ENCODE measurements at regions of chr7 and their contacts with region 1.

Region 1: GRCh38 chr7:140983802-140984201 is 30.9 kb downstream of the MRPS33 start:
- DNase-seq: no peak
- H3K4me3 ChIP-seq: no peak overlapping the region
- H3K27ac ChIP-seq: no peak overlapping the region
- H3K4me1 ChIP-seq: no peaks in the 10 kb centered on the region
- H3K27me3 ChIP-seq: no peaks in the 10 kb centered on the region
- CTCF ChIP-seq: peak; percentile 22 to 24

Region 2: DNA sequence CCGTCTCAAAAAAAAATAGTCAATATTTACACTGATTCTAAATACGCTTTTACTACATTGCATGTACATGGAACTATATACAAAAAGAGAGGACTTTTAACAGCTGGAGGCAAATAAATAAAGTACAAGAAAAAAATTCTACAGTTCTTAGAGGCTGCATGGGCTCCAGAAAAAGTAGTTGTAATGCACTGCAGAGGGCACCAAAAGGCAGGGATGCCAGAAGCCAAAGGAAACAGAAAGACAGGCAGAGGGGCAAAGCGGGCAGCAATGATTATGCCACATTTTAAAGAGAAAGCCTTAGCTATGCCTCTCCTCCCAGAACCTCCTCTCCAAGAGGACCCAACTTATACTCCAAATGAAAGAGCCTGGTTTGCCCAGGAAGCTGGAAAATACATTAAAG is 322.7 kb before region 1 on chr7:
- CTCF ChIA-PET with region 1: no interaction called
- dilution Hi-C with region 1: no loop called
- in situ Hi-C with region 1: no loop called
- intact Hi-C with region 1: loop called (anchors 2 kb)
- DNase-seq: no peak
- H3K4me3 ChIP-seq: no peak overlapping the region
- H3K27ac ChIP-seq: no peak overlapping the region
- H3K4me1 ChIP-seq: no peaks in the 10 kb centered on the region
- H3K27me3 ChIP-seq: no peaks in the 10 kb centered on the region
- CTCF ChIP-seq: peak in 1 of 2 donors; percentile 24

Measured in mammary epithelial cell (primary cell).